Naive thymus-derived CD4-positive, alpha-beta T cell (primary cell): ENCODE measurements at regions of chr6 and their contacts with region 1.

Region 1: DNA sequence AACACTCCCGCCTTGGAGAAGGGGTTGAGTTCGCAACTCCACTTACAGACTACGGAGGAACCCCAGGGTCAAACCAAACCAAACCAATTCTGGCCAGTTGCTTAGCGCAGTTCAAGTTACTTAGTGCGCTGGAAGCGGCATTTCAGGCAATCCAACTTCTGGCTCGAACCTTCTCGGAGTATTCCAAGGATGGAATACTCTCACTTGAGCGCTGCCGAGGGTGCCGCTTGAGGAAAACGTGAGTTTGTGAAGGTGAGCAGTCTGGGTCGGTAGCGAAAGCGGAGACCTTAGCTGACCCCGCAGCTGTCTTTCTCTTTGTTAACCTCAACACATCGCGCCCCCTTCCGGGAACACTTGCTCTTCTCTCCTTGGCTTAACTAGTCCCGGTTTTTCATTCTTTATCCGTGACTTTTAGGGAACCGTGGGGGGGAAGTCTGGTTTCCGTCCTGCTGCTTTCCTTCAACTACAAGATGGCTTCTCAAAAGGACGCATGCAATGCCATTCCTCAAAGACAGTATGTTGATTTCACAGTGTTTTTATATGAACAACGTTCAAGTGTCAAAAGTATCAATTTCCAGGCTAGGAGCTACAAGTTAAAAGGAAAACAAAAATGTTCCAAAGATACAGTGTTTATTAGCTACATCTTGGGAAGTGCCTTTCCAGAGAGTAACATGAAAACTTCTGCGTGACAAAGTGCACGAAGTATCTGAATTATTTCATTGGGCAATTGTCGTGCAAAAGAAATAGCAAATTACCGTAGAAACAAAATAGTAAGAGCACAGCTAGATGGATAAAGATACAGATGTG is 742 bp upstream of the PNISR start:
- DNase-seq: peak in 4 of 9 donors; percentile 54 to 65 (median 58)
- ATAC-seq: peak; percentile 58
- H3K4me3 ChIP-seq: peak overlapping the region; percentile 95
- H3K4me3 Mint-ChIP-seq: peak overlapping the region; percentile 91 to 100 (median 96)
- H3K27ac ChIP-seq: peak overlapping the region; percentile 93
- H3K27ac Mint-ChIP-seq: peak overlapping the region; percentile 96 to 100 (median 99)
- H3K4me1 ChIP-seq: peaks cover 37 to 50% of the 10 kb centered on the region in 2 donors
- H3K4me1 Mint-ChIP-seq: peaks cover 43 to 74% (median 61%) of the 10 kb centered on the region in 7 donors
- H3K27me3 ChIP-seq: no peaks in the 10 kb centered on the region
- H3K27me3 Mint-ChIP-seq: peaks cover 0 to 2% (median 0%) of the 10 kb centered on the region in 5 donors

Region 2: GRCh38 chr6:99330159-99330558 is 95.7 kb before region 1 on chr6:
- CTCF ChIA-PET with region 1: interaction called, 9 read pairs
- POLR2A ChIA-PET with region 1: interaction called, 3 read pairs
- intact Hi-C with region 1: loop called (anchors 1 kb)
- DNase-seq: peak in 7 of 9 donors; percentile 20 to 52 (median 45)
- ATAC-seq: peak; percentile 79
- H3K4me3 ChIP-seq: no peak overlapping the region
- H3K4me3 Mint-ChIP-seq: peak overlapping the region in 1 of 10 donors; percentile 15
- H3K27ac ChIP-seq: no peak overlapping the region
- H3K27ac Mint-ChIP-seq: no peak overlapping the region
- H3K4me1 ChIP-seq: no peaks in the 10 kb centered on the region
- H3K4me1 Mint-ChIP-seq: peaks cover 0 to 4% (median 2%) of the 10 kb centered on the region in 7 donors
- H3K27me3 ChIP-seq: no peaks in the 10 kb centered on the region
- H3K27me3 Mint-ChIP-seq: peaks cover 0 to 13% (median 6%) of the 10 kb centered on the region in 5 donors

Region 3: GRCh38 chr6:99393698-99394531 is 31.9 kb before region 1 on chr6 and contains the start of gene COQ3:
- CTCF ChIA-PET with region 1: no interaction called
- POLR2A ChIA-PET with region 1: interaction called, 34 read pairs
- intact Hi-C with region 1: loop called (anchors 1 kb)
- DNase-seq: peak; percentile 48 to 79 (median 57)
- ATAC-seq: peak; percentile 65
- H3K4me3 ChIP-seq: peak within 1 kb of the TSS; percentile 77
- H3K4me3 Mint-ChIP-seq: peak within 1 kb of the TSS; percentile 89 to 97 (median 93)
- H3K27ac ChIP-seq: peak within 1 kb of the TSS; percentile 75
- H3K27ac Mint-ChIP-seq: peak within 1 kb of the TSS; percentile 72 to 95 (median 93)
- H3K4me1 ChIP-seq: peaks cover 0 to 3% of the 10 kb centered on the region in 2 donors
- H3K4me1 Mint-ChIP-seq: peaks cover 13 to 31% (median 21%) of the 10 kb centered on the region in 7 donors
- H3K27me3 ChIP-seq: no peaks in the 10 kb centered on the region
- H3K27me3 Mint-ChIP-seq: no peaks in the 10 kb centered on the region
- total RNA-seq, gene COQ3: 1.8 to 7.3 (median 4.2) TPM

Region 4: GRCh38 chr6:99501762-99502161 is 75.9 kb after region 1 on chr6:
- CTCF ChIA-PET with region 1: no interaction called
- POLR2A ChIA-PET with region 1: no interaction called
- intact Hi-C with region 1: no loop called
- DNase-seq: no peak
- ATAC-seq: no peak
- H3K4me3 ChIP-seq: no peak overlapping the region
- H3K4me3 Mint-ChIP-seq: no peak overlapping the region
- H3K27ac ChIP-seq: no peak overlapping the region
- H3K27ac Mint-ChIP-seq: no peak overlapping the region
- H3K4me1 ChIP-seq: no peaks in the 10 kb centered on the region
- H3K4me1 Mint-ChIP-seq: peaks cover 0 to 4% (median 0%) of the 10 kb centered on the region in 7 donors
- H3K27me3 ChIP-seq: no peaks in the 10 kb centered on the region
- H3K27me3 Mint-ChIP-seq: no peaks in the 10 kb centered on the region

Region 5: DNA sequence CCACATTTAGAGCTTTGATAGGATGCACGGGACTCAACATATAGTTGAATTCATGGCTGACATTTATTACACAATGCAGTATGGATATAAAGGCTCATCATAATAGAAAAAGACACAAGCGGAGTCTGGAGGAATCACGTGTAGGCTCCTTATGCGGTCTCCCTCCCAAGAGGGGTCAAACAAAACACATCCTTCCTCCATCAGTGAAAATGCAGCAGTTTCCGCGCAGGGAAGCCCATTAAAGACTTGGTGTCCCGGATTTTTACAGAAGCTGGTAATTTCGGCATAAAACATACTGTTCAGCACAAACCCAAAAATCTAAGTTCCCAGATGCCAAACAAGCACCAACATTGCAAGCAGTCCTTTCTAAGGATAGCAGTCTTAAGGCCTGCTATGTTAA is 88.2 kb after region 1 on chr6:
- CTCF ChIA-PET with region 1: no interaction called
- POLR2A ChIA-PET with region 1: interaction called, 3 read pairs
- intact Hi-C with region 1: loop called (anchors 1 kb)
- DNase-seq: no peak
- ATAC-seq: no peak
- H3K4me3 ChIP-seq: peak overlapping the region; percentile 75
- H3K4me3 Mint-ChIP-seq: peak overlapping the region; percentile 26 to 99 (median 93)
- H3K27ac ChIP-seq: no peak overlapping the region
- H3K27ac Mint-ChIP-seq: peak overlapping the region in 5 of 9 donors; percentile 33 to 86 (median 65)
- H3K4me1 ChIP-seq: peaks cover 0 to 16% of the 10 kb centered on the region in 2 donors
- H3K4me1 Mint-ChIP-seq: peaks cover 4 to 32% (median 28%) of the 10 kb centered on the region in 7 donors
- H3K27me3 ChIP-seq: no peaks in the 10 kb centered on the region
- H3K27me3 Mint-ChIP-seq: peaks cover 0 to 12% (median 0%) of the 10 kb centered on the region in 5 donors

Region 6: DNA sequence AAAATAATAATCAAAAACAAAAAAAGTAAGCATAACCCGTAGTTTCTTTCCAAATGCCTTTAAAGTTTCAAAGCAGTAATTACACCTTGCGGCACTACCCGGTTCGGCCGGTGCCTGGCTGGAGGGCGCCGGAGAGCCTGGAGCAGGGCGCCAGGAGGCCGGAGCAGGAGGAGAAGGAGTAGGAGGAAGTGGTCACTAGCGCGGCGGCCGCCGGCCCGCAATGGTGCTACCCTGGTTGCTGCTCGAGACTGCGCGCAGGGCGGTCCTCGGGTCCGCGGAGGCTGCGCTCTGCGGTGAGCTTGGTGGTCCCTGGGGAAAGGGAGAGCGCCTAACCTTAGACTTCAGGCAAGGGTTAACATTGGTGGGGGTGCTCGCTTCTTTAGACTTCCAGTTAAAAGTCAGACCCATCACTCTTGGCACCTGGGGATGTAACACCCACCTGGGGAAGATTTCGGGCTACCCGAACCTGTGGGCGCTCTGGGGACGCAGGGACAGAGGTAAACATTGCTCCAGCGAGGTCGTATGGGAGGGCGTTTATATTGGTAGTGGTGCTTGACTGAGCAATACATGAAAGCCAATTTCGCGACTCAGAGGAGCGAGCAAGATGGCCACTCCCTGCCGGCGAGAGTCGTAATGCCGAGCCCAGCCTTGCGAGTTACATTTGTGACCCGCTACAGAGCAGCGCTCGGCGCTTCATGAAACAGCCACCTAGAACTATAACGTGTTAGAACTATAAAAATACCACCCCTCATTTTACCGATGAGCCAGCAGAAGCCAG is 95.2 kb after region 1 on chr6:
- CTCF ChIA-PET with region 1: no interaction called
- POLR2A ChIA-PET with region 1: interaction called, 5 read pairs
- intact Hi-C with region 1: loop called in 1 of 2 experiments (anchors 1 kb)
- DNase-seq: peak; percentile 43 to 79 (median 62)
- ATAC-seq: peak; percentile 92
- H3K4me3 ChIP-seq: peak overlapping the region; percentile 73
- H3K4me3 Mint-ChIP-seq: peak overlapping the region; percentile 87 to 99 (median 92)
- H3K27ac ChIP-seq: peak overlapping the region; percentile 60
- H3K27ac Mint-ChIP-seq: peak overlapping the region; percentile 38 to 97 (median 90)
- H3K4me1 ChIP-seq: peaks cover 4 to 11% of the 10 kb centered on the region in 2 donors
- H3K4me1 Mint-ChIP-seq: peaks cover 12 to 26% (median 17%) of the 10 kb centered on the region in 7 donors
- H3K27me3 ChIP-seq: no peaks in the 10 kb centered on the region
- H3K27me3 Mint-ChIP-seq: peaks cover 0 to 15% (median 0%) of the 10 kb centered on the region in 5 donors

Region 7: GRCh38 chr6:100880853-100881706 is 1455.2 kb after region 1 on chr6 and contains the start of gene ASCC3:
- CTCF ChIA-PET with region 1: no interaction called
- POLR2A ChIA-PET with region 1: no interaction called
- intact Hi-C with region 1: loop called (anchors 2 to 10 kb)
- DNase-seq: peak; percentile 80 to 93 (median 86)
- ATAC-seq: peak; percentile 98
- H3K4me3 ChIP-seq: peak within 1 kb of the TSS; percentile 85
- H3K4me3 Mint-ChIP-seq: peak within 1 kb of the TSS; percentile 97 to 100 (median 100)
- H3K27ac ChIP-seq: peak within 1 kb of the TSS; percentile 90
- H3K27ac Mint-ChIP-seq: peak within 1 kb of the TSS; percentile 95 to 100 (median 98)
- H3K4me1 ChIP-seq: peaks cover 24 to 27% of the 10 kb centered on the region in 2 donors
- H3K4me1 Mint-ChIP-seq: peaks cover 19 to 64% (median 50%) of the 10 kb centered on the region in 7 donors
- H3K27me3 ChIP-seq: no peaks in the 10 kb centered on the region
- H3K27me3 Mint-ChIP-seq: peaks cover 0 to 4% (median 3%) of the 10 kb centered on the region in 5 donors
- total RNA-seq, gene ASCC3: 40.7 to 73.8 (median 42.9) TPM